ENCODE measurements at regions of chr14 and their contacts with region 1.

Region 1: GRCh38 chr14:80850197-80850814 is 91.2 kb downstream of the CEP128 start:
- DNase-seq: no peak
- ATAC-seq: no peak

Region 2: DNA sequence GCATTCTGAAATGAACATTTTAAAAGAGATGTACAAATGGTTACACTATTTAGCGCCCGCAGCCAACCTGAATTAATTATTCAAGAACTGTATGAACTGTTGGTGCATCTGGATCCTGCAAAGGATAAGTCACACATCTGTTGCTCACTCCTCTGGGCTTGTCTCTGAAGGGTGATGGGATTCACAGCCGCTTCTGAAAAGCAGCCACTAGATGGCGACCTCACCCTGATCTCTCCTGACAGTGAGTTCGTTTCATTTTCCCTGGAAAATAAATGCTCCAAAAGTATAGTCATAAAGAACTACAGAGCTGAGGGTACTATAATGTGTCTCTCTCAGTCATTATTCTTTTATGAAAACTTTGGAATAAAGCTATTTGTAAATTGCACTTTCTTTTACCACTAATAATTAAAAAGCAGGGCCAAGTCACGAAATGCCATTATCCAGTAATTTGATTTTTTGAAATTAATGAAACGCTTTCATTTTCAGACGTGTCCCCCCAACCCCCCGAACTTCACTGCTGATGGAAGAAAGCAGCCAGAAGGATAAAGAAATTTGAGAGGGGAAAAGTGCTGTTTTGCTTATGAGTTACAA is 1890.5 kb before region 1 on chr14:
- intact Hi-C with region 1: loop called (anchors 5 kb)
- DNase-seq: peak; percentile 62
- ATAC-seq: peak; percentile 71

Region 3: GRCh38 chr14:80055667-80056496 is 794.4 kb before region 1 on chr14:
- intact Hi-C with region 1: loop called (anchors 5 kb)
- DNase-seq: no peak
- ATAC-seq: peak; percentile 58

Region 4: DNA sequence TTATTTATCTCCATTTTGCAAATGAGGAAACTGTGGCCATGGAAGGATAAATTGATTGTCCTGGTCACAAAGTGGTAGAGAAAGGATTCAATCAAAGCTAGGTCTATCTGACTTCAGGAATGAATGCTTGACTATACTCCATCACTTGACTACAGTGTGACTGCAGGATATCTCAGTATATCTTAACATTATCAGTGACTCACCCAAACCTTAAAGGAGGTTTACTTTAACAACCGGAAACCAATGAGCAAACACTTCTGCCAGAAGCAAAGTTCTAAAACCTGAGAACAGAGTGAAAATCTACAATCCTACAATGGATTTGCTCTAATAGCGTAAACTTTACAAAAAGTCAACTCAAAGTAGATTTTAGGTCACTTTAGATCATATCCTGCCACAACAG is 185.7 kb before region 1 on chr14:
- intact Hi-C with region 1: no loop called
- DNase-seq: no peak
- ATAC-seq: no peak